Activated T-helper 1 cell treated with anti-CD3 and anti-CD28 coated beads, Interleukin-12 subunit alpha, Interleukin-12 subunit beta, Interleukin-2, Interleukin-4 antibody, amounts not matched to agents 30 ng/mL and 10 ng/mL and 1 ng/mL, durations not matched to agents 14 hours and 24 hours and 36 hours (primary cell): ENCODE measurements at regions of chr17 and their contacts with region 1.

Region 1: DNA sequence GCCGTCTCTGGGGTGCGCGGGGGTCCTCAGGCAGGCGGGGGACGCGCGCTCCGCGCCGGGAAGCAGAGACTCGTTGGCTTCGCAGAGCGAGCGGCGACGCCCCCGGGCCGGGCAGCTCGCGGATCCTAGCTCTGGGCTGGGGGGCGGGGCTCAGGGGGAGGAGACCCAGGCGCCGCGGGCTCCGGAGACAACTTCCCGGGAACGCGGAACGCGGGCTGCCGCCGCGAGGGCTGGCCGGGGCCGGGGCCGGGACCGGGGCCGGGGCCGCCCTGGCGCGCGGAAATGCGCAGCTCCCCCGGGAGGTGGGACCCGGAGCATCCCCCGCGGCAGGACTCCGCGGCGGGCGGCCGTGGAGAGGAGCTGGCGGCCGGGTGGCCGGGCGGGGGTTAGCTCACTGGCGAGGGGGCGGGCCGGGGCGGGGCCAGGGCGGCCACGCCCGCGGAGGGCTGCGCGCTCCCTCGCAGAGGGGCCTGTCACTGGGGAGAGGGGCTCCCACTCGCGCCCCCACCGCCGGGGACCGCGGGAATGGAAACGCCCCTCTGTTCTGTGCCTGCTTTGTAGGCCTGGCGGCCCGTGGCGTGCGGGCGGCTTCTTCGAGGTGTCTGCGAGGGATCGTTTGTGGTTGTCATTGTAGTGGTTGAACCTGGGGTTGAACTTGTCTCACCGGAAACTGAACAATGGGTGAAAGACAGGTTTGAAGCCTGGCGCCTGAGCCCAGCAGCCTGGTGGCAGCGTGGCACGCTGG is at the start of gene GAS7:
- DNase-seq: peak; percentile 1
- H3K4me3 Mint-ChIP-seq: peak within 1 kb of the TSS; percentile 61
- H3K27ac Mint-ChIP-seq: no peak within 1 kb of the TSS
- H3K4me1 Mint-ChIP-seq: no peaks in the 10 kb centered on the region
- H3K27me3 Mint-ChIP-seq: peaks cover 16% of the 10 kb centered on the region
- total RNA-seq, gene GAS7: 0.16 and 0.17 TPM in 2 replicates

Region 2: DNA sequence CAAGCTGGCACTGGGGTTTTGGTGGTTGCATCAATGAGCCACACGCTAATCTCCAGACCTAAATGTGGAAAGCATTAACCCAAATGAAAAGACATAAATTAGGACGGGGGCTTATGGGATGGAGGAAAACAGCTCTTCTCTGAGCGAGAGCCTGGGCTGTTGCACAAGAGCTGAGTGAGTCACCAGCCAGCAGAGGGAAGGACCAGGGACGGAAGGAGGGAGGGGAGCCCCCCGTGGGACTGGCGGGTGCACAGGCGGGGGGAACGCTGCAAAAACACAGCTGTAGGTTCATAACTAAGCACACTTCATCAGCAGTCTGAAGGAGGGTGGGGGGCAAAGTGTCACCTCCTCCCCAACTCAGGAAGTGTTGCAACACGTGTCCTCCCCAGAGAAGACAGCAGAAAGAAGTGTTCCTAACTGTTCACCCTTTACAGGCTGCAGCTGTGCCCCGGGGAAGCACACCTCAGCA is 83.6 kb before region 1 on chr17:
- intact Hi-C with region 1: loop called (anchors 10 kb)
- DNase-seq: peak; percentile 9
- H3K4me3 Mint-ChIP-seq: peak overlapping the region; percentile 44
- H3K27ac Mint-ChIP-seq: peak overlapping the region; percentile 47
- H3K4me1 Mint-ChIP-seq: peaks cover 29% of the 10 kb centered on the region
- H3K27me3 Mint-ChIP-seq: peaks cover 11% of the 10 kb centered on the region

Region 3: GRCh38 chr17:10251212-10251948 is 52.7 kb after region 1 on chr17:
- intact Hi-C with region 1: no loop called
- DNase-seq: no peak
- H3K4me3 Mint-ChIP-seq: no peak overlapping the region
- H3K27ac Mint-ChIP-seq: no peak overlapping the region
- H3K4me1 Mint-ChIP-seq: no peaks in the 10 kb centered on the region
- H3K27me3 Mint-ChIP-seq: no peaks in the 10 kb centered on the region